ENCODE measurements at regions of chr9 and their contacts with region 1.

Region 1: GRCh38 chr9:106731910-106732309 is 131.1 kb upstream of the ZNF462 start:
- DNase-seq: no peak

Region 2: DNA sequence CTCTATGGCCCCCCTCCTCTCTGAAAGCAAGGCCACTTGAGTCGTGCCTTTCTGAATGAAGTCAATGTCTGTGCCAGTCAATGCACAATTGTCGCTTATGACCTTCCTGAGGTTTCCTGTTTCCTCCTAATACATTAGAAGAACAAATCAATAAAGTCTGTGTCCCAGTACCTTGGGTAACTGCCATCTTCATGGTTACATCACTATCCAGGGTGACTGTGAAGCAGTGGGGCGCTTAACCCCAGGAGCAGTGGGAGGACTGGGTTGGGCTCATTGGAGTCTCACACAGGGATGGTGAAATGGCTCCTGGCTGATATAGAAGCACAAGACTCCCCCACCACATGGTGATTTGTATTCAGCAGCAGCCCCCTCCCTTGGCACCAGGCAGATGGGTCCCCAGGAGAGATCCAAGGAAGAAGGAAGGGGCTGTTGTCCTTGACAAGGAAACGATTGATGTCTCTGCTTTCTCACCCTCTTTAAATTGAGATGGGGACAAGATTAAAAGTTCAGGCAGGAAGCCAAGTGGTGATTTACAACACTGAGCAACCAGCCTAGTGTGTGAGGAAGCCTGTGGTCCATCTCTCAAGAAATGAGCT is 130.9 kb before region 1 on chr9:
- intact Hi-C with region 1: no loop called
- DNase-seq: no peak

Region 3: DNA sequence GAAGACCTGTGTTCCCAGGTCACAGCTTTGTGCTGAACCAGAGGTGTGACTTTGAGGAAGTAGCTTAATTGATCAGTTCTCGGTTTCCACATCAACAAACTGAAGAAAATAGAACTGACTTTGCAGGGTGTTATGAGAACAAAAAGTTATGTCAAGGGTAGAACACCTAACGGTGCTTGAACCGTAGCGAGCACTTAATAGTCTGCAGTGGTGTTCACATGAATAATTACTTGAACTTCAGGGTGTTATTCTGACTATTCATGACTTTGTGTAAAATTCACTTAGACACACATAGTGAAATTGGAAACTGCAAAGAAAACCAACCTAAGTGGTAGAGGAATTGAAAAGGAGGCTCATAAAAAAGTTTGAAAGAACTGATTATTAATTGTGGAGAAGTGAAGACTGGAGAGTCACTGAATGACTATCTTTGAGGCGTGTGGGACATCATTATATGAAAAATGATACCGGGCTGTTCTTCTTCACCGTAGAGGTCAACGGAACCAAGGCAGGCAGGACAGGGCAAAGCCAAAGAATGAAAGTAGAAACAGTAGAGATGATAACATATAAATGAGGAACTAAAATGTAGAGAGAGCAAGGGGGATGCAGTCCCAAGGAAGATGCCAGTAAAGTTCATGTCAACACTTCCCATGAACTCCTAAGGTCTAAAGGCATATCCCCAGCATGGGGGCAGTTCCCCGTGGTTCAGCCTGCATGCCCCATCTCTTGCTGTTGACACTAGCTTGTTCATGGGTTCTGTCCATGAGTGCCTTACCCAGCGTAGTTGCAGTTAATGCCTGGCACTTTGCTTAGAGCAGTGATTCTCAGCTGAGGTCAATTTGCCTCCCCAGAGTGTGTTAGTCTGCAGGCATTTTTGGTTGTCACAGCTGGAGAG is 249.7 kb after region 1 on chr9:
- intact Hi-C with region 1: loop called in 1 of 2 experiments (anchors 2 kb)
- DNase-seq: no peak

Measured in posterior vena cava (tissue), 2 donors.